Psoas muscle (tissue), 8 donors: ENCODE measurements at regions of chr5 and their contacts with region 1.

Region 1: DNA sequence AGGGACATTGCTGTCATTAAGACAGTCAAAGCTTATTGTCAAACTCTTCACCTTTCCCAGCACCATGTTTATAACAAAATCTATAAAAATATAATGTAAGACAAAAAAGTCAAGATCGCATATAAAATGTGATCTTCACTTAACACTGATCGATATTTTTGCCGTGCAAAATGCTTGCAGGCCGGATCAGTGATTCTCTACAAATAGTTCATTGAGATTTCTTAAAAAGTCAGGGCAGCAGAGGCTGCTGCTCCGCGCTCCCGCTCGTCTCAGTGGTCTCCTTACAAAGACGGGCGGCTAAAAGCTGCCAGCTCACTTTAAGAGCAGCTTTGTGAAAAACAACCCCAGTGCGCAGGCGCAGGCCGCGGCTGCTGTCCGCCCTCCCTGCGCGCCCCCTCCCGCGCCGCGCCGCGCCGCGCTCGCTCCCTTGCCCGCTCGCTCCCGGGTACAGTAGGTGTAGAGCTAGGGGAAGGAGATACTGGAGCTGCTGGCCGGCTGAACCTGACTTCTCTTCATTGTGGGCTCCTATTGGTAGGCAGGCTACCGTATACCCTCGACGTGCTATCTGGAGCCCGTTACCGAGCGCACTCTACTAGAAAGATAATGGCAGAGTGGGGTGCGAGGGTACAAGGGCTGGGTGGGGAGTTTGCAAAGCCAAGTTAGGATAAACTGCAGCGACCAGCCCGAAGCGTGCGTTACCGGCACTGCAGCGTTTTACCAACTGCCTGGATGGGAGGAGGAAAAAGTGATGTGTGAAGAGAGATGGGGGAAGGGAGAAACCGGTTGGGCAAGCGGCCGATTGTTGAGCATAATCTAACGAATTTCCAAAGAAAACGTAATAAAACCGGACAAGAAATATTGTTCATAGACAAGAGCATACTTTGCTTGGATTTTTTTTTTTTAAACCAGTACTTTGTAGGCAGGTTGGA is at the start of gene ARRDC3:
- DNase-seq: peak; percentile 95 to 98
- ATAC-seq: peak; percentile 71 to 79 (median 76)
- H3K4me3 ChIP-seq: peak within 1 kb of the TSS; percentile 77
- H3K27ac ChIP-seq: peak within 1 kb of the TSS; percentile 99
- H3K4me1 ChIP-seq: peaks cover 16% of the 10 kb centered on the region
- H3K27me3 ChIP-seq: no peaks in the 10 kb centered on the region
- CTCF ChIP-seq: no peak
- total RNA-seq, gene ARRDC3: 28.6 to 122 (median 59.2) TPM

Region 2: GRCh38 chr5:90866333-90866732 is 517.0 kb before region 1 on chr5:
- intact Hi-C with region 1: loop called (anchors 1 to 10 kb)
- DNase-seq: no peak
- ATAC-seq: peak in 2 of 4 donors; percentile 52 to 83
- H3K4me3 ChIP-seq: no peak overlapping the region
- H3K27ac ChIP-seq: no peak overlapping the region
- H3K4me1 ChIP-seq: peaks cover 6% of the 10 kb centered on the region
- H3K27me3 ChIP-seq: no peaks in the 10 kb centered on the region
- CTCF ChIP-seq: peak; percentile 60

Region 3: GRCh38 chr5:90932052-90932699 is 451.1 kb before region 1 on chr5:
- intact Hi-C with region 1: loop called (anchors 2 to 10 kb)
- DNase-seq: no peak
- ATAC-seq: peak in 3 of 4 donors; percentile 57 to 85 (median 65)
- H3K4me3 ChIP-seq: no peak overlapping the region
- H3K27ac ChIP-seq: no peak overlapping the region
- H3K4me1 ChIP-seq: no peaks in the 10 kb centered on the region
- H3K27me3 ChIP-seq: peaks cover 0 to 2% (median 0%) of the 10 kb centered on the region in 3 donors
- CTCF ChIP-seq: peak; percentile 83

Region 4: GRCh38 chr5:91101600-91102379 is 281.5 kb before region 1 on chr5:
- intact Hi-C with region 1: loop called (anchors 2 kb)
- DNase-seq: peak; percentile 60 to 73
- ATAC-seq: peak; percentile 90 to 99 (median 97)
- H3K4me3 ChIP-seq: no peak overlapping the region
- H3K27ac ChIP-seq: no peak overlapping the region
- H3K4me1 ChIP-seq: peaks cover 3% of the 10 kb centered on the region
- H3K27me3 ChIP-seq: no peaks in the 10 kb centered on the region
- CTCF ChIP-seq: peak; percentile 77

Region 5: DNA sequence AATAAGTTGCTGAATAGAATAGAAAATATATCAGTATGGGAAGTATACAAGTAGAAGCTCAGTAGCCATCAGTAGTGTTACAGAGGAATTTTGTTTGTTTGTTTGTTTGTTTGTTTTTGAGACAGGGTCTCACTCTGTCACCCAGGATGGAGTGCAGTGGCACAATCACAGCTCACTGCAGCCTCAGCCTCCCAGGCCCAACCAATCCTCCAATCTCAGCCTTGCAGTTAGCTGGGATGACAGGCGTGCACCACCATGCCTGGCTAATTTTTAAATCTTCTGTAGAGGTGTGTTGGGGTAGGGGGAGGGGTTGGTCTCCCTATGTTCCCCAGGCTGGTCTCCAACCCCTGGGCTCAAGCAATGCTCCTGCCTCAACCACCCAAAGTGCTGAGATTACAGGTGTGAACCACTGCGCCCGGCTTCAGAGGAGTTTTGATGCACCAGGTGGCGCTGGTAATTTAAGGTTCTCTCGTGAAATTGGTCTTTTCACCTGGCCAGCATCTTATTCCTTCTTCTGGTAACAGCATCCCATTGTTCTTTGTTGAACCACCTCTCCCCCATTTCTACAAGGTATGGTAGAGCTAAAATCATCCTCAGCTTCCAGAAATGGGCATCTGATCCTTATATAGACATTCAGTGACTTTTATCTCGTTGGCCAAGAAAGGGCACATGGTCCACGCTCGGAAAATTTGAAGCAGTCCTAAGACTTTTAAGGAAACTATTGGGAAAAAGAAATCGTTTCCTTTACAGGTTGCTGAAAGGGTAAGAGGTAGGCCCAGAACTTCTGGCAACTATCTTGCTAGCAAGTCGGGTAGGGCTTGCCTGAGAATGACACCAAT is 157.2 kb before region 1 on chr5:
- intact Hi-C with region 1: loop called (anchors 2 to 5 kb)
- DNase-seq: no peak
- ATAC-seq: peak; percentile 51 to 85 (median 68)
- H3K4me3 ChIP-seq: no peak overlapping the region
- H3K27ac ChIP-seq: no peak overlapping the region
- H3K4me1 ChIP-seq: no peaks in the 10 kb centered on the region
- H3K27me3 ChIP-seq: no peaks in the 10 kb centered on the region
- CTCF ChIP-seq: peak; percentile 48

Region 6: DNA sequence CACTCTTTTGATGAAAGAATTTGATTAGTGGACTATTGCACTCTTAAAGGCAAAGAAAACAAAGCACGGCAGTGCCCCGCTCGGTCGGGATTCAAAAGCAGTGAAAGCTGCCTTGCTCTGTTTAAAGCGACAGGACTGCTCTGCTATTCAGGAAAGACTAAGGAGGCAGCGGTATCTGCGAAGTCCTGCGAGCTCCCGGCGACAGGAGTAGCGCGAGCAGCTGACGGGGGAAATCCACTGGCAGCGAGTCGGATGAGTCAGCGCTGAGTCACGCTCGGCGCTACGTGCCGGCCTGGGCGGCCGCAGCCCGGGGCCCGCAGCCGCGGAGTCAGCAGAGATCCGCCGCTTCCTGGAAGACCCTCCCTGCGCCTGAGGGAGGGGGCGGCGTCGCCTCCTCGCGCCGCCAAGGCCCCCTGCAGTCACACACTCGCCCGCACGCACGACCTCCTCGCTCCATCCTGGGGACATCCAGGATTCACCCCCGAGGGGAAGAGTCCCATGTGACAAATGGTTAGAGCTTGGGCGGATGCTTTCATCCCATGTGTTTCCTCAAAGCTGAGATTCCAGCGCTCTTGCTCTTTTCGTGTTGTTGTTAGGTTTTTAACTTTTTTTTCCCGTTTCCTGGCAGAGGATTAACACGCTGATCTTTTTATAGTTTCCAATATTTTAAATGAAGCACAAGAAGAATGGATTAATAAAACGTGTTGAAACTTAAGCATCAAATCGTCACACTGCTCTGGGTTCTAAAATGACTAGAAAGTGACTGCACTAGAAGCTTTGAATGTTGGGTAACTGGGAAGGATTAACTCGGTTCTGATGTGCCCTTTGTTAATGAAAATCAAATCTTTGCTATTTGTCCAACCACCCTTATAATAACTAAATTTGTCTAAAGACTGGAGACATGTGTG is 102.7 kb before region 1 on chr5:
- intact Hi-C with region 1: loop called in 1 of 2 experiments (anchors 1 kb)
- DNase-seq: peak; percentile 95 to 97
- ATAC-seq: peak; percentile 97 to 99 (median 98)
- H3K4me3 ChIP-seq: peak overlapping the region; percentile 64
- H3K27ac ChIP-seq: peak overlapping the region; percentile 96
- H3K4me1 ChIP-seq: peaks cover 12% of the 10 kb centered on the region
- H3K27me3 ChIP-seq: no peaks in the 10 kb centered on the region
- CTCF ChIP-seq: no peak

Region 7: DNA sequence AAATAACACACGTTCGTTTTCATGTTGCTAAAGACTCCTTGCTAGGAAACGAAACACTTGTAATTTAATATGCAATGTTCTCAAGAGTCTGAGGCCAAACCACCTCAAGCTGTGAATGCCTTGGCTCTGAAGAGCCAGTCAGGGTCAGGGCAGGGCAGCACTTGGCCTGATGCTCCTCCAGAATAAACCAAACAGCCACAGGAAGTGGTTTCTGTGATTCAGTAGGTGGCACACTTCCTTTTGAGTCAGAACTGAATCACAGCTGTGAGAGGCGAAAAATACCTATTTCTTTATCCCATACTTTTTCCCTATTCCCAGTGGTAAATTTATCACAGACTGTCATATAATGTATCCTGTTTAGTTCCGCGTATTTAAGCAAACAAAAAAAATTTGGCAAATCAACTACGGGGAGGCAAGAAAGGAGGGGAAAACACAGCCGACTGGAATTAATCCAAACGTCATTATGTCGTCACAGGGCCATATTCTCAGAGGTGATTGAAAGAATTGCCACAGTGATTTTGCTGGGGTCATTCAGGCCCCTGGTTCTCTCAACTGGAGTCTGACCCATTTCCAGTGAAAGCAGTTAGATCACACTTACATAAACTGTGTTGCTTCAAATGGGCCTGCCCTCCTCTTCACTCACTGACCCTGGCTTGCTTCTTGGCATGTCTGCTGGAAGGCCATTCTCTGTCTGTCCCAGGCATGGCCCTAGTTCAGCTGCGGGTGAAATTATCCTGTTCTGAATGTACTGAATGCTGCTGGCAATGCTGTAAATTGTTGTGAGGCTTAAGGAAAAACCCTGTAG is 71.4 kb before region 1 on chr5:
- intact Hi-C with region 1: loop called (anchors 1 to 5 kb)
- DNase-seq: peak; percentile 84 to 92
- ATAC-seq: peak; percentile 73 to 77 (median 75)
- H3K4me3 ChIP-seq: peak overlapping the region; percentile 59
- H3K27ac ChIP-seq: peak overlapping the region; percentile 97
- H3K4me1 ChIP-seq: peaks cover 44% of the 10 kb centered on the region
- H3K27me3 ChIP-seq: no peaks in the 10 kb centered on the region
- CTCF ChIP-seq: no peak

Region 8: GRCh38 chr5:91419571-91420537 is 36.6 kb after region 1 on chr5:
- intact Hi-C with region 1: no loop called
- DNase-seq: peak; percentile 34 to 51
- ATAC-seq: peak in 2 of 4 donors; percentile 21 to 67
- H3K4me3 ChIP-seq: no peak overlapping the region
- H3K27ac ChIP-seq: no peak overlapping the region
- H3K4me1 ChIP-seq: no peaks in the 10 kb centered on the region
- H3K27me3 ChIP-seq: no peaks in the 10 kb centered on the region
- CTCF ChIP-seq: peak; percentile 86

Region 9: DNA sequence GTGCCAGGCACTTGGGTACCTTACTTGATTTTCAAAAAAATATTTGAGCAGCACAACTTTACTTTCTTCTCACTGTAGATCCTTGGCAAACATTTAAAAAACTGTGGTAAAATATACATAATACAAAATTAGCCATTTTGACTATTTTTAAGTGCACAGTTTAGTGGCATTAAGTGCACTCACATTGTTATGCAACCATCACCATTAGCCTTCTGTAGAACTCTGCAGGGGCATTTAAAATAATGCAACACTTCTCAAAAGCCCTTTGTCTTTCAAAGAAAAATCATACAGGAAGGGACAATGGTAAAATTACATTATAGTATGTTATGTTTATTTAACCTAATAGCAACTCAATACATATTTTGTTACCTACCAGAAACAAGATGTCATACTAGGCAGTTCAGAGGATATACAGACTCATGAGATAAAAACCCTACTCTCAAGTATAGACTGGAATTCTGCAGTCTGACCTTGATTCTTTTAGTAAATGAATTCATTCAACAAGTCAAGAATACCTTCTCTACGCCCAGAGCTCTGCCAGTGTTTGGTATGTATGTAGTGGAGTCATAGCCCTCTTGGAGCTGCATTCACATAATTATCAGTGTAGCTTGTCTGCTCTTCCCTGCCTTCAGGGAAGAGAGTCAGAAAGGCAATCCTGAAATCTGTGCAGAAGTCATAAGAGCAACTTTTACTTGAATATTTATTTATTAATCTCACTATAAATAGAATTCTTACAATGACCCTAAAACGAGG is 73.8 kb after region 1 on chr5:
- intact Hi-C with region 1: no loop called
- DNase-seq: no peak
- ATAC-seq: no peak
- H3K4me3 ChIP-seq: no peak overlapping the region
- H3K27ac ChIP-seq: no peak overlapping the region
- H3K4me1 ChIP-seq: no peaks in the 10 kb centered on the region
- H3K27me3 ChIP-seq: no peaks in the 10 kb centered on the region
- CTCF ChIP-seq: no peak